Activated T-helper 1 cell treated with anti-CD3 and anti-CD28 coated beads, Interleukin-12 subunit alpha, Interleukin-12 subunit beta, Interleukin-2, Interleukin-4 antibody, amounts not matched to agents 30 ng/mL and 10 ng/mL and 1 ng/mL, durations not matched to agents 14 hours and 24 hours and 36 hours (primary cell): ENCODE measurements at regions of chr11 and their contacts with region 1.

Region 1: GRCh38 chr11:123020968-123021367 is 39.3 kb upstream of the BSX start:
- DNase-seq: peak; percentile 9
- H3K4me3 Mint-ChIP-seq: no peak overlapping the region
- H3K27ac Mint-ChIP-seq: no peak overlapping the region
- H3K4me1 Mint-ChIP-seq: peaks cover 10% of the 10 kb centered on the region
- H3K27me3 Mint-ChIP-seq: peaks cover 24% of the 10 kb centered on the region

Region 2: DNA sequence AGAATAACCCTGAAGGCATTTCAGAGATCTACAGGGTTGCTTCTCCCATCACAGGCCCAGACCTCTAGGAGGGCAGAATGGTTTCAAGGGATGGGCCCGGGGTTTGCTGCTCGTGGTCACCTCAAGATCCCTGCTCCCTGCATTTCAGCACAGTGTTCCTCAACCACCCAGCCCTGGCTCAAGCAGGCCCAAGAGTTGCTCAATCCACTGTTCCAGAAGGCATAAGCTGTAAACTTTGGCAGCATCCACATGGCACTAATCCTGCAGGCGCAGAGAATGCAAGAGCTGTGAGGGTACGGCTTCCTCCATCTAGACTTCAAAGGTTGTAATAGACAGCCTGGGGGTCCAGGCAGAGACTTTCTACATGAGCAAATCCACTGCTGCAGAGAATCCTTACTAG is 590.5 kb before region 1 on chr11:
- intact Hi-C with region 1: no loop called
- DNase-seq: no peak
- H3K4me3 Mint-ChIP-seq: no peak overlapping the region
- H3K27ac Mint-ChIP-seq: no peak overlapping the region
- H3K4me1 Mint-ChIP-seq: no peaks in the 10 kb centered on the region
- H3K27me3 Mint-ChIP-seq: peaks cover 1% of the 10 kb centered on the region

Region 3: DNA sequence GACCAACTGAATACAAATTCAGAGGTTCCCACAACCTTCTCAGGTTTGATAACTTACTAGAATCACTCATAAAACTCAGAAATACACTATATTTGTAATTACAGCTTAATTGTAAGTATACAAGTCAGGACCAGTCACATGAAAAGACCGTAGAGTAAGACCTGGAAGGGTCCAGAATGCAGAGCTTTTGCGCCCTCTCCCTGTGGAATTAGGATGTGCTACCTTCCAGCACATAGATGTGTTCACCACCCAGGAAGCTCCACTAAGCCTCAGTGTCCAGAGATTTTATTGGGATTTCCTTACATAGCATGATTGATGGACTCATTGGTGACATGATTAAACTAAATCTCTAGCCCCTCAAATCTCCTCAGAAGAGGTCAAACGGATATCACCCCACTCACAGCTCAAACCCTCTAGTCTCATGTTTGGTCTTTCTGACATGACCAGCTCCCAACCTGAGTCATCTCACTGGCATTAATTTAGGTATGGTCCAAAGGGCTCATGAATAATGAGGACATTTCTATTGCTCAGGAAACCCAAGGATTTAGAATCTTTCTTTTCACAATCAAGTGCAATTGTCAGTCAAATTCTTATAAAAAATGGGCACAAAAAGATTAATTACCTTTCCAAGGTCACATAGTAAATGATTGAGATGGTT is 442.7 kb before region 1 on chr11:
- intact Hi-C with region 1: loop called (anchors 1 kb)
- DNase-seq: no peak
- H3K4me3 Mint-ChIP-seq: no peak overlapping the region
- H3K27ac Mint-ChIP-seq: no peak overlapping the region
- H3K4me1 Mint-ChIP-seq: peaks cover 12% of the 10 kb centered on the region
- H3K27me3 Mint-ChIP-seq: peaks cover 7% of the 10 kb centered on the region

Region 4: GRCh38 chr11:122796128-122796717 is 224.7 kb before region 1 on chr11:
- intact Hi-C with region 1: loop called (anchors 1 kb)
- DNase-seq: peak; percentile 33
- H3K4me3 Mint-ChIP-seq: no peak overlapping the region
- H3K27ac Mint-ChIP-seq: no peak overlapping the region
- H3K4me1 Mint-ChIP-seq: no peaks in the 10 kb centered on the region
- H3K27me3 Mint-ChIP-seq: peaks cover 5% of the 10 kb centered on the region

Region 5: GRCh38 chr11:122832721-122833470 is 188.1 kb before region 1 on chr11:
- intact Hi-C with region 1: no loop called
- DNase-seq: no peak
- H3K4me3 Mint-ChIP-seq: no peak overlapping the region
- H3K27ac Mint-ChIP-seq: no peak overlapping the region
- H3K4me1 Mint-ChIP-seq: no peaks in the 10 kb centered on the region
- H3K27me3 Mint-ChIP-seq: peaks cover 5% of the 10 kb centered on the region

Region 6: DNA sequence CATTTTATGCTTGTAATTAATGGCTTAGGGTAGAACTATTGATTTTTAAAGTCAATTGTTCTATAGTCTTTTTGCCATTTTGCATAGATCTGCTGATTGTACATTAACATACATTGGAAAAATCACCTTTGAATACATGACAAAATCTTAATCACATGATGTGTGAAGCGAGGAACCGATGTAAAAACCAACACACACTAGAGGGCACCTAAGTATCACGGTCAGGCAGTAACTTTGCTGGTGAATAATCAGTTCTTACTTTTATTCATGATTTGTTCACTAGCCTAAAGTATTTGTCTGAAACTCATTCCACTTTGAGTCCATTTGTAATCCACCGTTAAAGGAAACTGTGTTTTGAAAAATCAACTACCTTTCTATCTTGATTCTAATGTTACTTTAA is 110.2 kb before region 1 on chr11:
- intact Hi-C with region 1: loop called (anchors 1 kb)
- DNase-seq: no peak
- H3K4me3 Mint-ChIP-seq: no peak overlapping the region
- H3K27ac Mint-ChIP-seq: no peak overlapping the region
- H3K4me1 Mint-ChIP-seq: no peaks in the 10 kb centered on the region
- H3K27me3 Mint-ChIP-seq: no peaks in the 10 kb centered on the region

Region 7: DNA sequence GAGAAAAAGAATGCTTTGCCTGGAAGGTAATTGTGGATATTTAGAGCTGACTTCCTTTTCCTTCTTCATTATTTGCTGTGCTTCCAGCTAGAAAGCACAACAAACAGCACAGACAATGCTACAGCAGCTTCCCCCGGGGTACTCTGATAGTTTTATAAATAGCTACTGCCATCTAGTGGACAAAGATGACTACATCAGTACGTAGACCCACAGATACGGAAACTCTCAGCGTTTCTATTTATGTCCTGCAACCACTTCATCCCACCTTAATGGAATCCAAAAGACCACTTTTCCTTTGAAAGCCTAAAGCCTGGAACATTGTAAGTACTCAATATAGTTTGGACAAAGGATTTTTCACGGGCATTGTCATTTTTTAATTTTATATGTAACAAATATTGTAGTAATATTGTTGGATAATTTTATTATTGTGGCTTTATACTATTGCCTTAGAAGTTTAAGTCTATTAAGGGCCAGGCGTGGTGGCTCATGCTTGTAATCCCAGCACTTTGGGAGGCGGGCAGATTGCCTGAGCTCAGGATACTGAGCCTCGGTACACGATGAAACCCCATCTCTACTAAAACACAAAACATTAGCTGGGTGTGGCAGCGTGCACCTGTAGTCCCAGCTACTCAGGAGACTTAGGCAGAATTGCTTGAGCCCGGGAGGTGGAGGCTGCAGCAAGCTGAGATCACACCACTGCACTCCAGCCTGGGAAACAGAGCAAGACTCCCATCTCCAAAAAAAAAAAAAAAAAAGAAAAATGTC is 33.5 kb after region 1 on chr11:
- intact Hi-C with region 1: loop called (anchors 2 kb)
- DNase-seq: no peak
- H3K4me3 Mint-ChIP-seq: no peak overlapping the region
- H3K27ac Mint-ChIP-seq: peak overlapping the region; percentile 52
- H3K4me1 Mint-ChIP-seq: peaks cover 49% of the 10 kb centered on the region
- H3K27me3 Mint-ChIP-seq: no peaks in the 10 kb centered on the region

Region 8: DNA sequence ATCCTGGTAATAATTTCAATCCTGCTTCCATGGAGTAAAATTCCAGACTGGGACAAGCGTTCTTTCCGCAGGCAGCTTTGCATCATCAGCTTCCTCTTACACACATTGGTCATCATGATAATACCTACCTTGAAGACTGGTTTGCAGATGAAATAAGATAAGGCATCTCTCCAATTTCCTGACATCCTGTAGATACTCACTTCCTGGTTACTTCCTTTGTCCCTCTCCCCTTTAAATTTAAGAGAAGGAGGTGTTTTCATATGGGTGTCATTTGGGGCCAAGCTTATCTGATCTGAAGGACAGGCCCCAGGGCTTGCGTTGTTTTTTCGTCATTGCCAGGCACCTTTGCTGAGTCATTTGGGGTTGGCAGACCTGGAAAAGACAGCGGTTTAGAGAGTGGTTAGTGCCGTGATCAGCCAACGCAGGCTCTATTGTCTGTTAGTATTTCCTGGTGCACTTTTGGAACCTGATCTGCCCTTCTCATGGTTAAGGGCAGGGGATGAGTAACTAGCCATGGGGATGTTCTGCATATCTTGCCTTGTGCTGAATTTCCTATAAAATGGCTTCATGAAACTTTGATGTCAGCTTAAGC is 433.2 kb after region 1 on chr11:
- intact Hi-C with region 1: no loop called
- DNase-seq: peak; percentile 74
- H3K4me3 Mint-ChIP-seq: peak overlapping the region; percentile 82
- H3K27ac Mint-ChIP-seq: peak overlapping the region; percentile 97
- H3K4me1 Mint-ChIP-seq: peaks cover 98% of the 10 kb centered on the region
- H3K27me3 Mint-ChIP-seq: no peaks in the 10 kb centered on the region

Region 9: GRCh38 chr11:123611698-123612097 is 590.7 kb after region 1 on chr11:
- intact Hi-C with region 1: no loop called
- DNase-seq: no peak
- H3K4me3 Mint-ChIP-seq: no peak overlapping the region
- H3K27ac Mint-ChIP-seq: no peak overlapping the region
- H3K4me1 Mint-ChIP-seq: no peaks in the 10 kb centered on the region
- H3K27me3 Mint-ChIP-seq: no peaks in the 10 kb centered on the region